A673 (cell line): ENCODE measurements at regions of chr14 and their contacts with region 1.

Region 1: DNA sequence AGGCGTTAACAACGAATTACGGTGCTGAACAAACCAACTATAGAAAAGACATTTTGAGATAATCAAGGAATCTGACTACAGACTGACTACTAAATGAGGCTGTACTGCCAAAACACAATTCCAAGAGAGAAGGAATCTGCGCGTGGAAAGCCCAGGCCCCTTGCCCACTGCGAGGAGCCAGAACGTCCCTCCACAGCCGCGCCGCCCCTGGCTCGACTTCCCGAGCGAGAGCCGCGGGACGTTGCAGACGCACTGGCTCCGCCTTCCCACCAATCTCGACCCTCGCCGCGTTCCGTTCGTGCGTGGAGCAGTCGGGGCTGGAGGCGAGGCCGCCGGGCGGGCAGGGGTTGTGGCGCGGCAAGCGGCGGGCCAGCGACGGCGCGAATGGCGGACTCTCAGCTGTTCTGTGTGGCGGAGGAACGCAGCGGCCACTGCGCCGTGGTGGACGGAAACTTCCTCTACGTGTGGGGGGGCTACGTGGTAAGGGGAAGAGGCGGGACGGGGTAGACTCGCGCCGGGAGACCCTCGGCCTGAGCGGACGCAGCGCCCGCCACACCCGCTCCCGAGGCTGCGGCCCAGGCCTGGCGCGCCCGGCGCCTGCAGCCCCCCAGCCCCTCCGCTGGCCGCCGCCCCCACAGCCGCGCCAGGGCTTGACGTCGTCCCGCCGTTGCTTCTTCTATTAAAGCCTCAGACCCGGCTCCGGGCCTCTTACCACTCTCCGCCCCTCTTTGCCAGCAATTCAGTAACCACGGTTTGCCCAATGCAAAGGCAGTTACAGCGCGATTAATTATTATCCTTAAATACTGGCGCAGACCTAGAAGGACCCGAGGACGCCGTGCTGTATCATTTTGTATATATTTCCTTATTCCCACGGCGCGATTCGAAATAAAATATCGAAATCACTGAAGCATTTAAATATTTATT is at the start of gene KLHDC1:
- DNase-seq: peak; percentile 88
- H3K4me3 ChIP-seq: peak within 1 kb of the TSS; percentile 62
- H3K27ac ChIP-seq: peak within 1 kb of the TSS; percentile 90
- H3K4me1 ChIP-seq: peaks cover 5% of the 10 kb centered on the region
- H3K27me3 ChIP-seq: no peaks in the 10 kb centered on the region
- CTCF ChIP-seq: no peak
- total RNA-seq, gene KLHDC1: 1.3 TPM in 2 replicates

Region 2: GRCh38 chr14:49550286-49551184 is 142.5 kb before region 1 on chr14:
- CTCF ChIA-PET with region 1: no interaction called
- POLR2A ChIA-PET with region 1: no interaction called
- intact Hi-C with region 1: no loop called
- DNase-seq: peak; percentile 12
- H3K4me3 ChIP-seq: no peak overlapping the region
- H3K27ac ChIP-seq: no peak overlapping the region
- H3K4me1 ChIP-seq: no peaks in the 10 kb centered on the region
- H3K27me3 ChIP-seq: no peaks in the 10 kb centered on the region
- CTCF ChIP-seq: peak; percentile 52

Region 3: DNA sequence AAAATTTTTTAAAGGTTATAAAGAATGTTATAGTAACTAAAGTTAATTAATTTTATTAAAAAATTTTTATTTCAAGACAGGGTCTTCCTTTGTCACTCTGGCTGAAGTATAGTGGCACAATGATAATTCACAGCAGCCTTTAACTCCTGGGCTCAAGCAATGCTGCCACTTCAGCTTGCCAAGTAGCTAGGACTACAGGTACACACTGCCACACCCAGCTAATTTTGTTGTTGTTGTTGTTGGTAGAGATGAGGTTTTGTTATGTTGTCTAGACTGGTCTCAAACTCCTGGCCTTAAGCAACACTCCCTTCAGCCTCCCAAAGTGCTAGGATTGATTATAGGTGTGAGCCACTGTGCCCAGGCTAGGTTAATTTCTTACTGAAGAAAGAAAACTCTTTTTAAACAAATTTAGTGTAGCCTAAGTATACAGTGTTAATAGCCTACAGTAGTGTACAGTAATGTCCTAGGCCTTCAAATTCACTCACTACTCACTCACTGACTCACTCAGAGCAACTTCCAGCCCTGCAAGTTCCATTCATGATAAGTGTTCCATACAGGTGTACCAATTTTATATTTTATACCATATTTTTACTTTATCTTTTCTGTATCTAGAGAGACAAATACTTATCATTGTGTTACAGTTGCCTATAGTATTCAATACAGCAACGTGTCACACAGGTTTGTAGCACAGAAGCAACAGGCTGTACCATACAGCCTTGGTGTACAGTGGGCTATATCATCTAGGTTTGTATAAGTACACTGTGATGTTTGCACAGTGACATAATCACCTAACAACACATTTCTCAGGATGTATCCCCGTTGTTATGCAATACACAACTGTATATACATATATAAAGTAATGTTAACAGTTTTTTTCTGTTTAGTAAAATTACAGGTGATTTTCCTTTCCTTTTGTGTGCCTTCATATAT is 33.3 kb before region 1 on chr14:
- CTCF ChIA-PET with region 1: no interaction called
- POLR2A ChIA-PET with region 1: no interaction called
- intact Hi-C with region 1: no loop called
- DNase-seq: no peak
- H3K4me3 ChIP-seq: no peak overlapping the region
- H3K27ac ChIP-seq: no peak overlapping the region
- H3K4me1 ChIP-seq: no peaks in the 10 kb centered on the region
- H3K27me3 ChIP-seq: no peaks in the 10 kb centered on the region
- CTCF ChIP-seq: no peak

Region 4: GRCh38 chr14:49767562-49768300 is 74.7 kb after region 1 on chr14 and contains the start of gene KLHDC2:
- CTCF ChIA-PET with region 1: no interaction called
- POLR2A ChIA-PET with region 1: no interaction called
- intact Hi-C with region 1: loop called (anchors 2 kb)
- DNase-seq: peak; percentile 93
- H3K4me3 ChIP-seq: peak within 1 kb of the TSS; percentile 99
- H3K27ac ChIP-seq: peak within 1 kb of the TSS; percentile 98
- H3K4me1 ChIP-seq: no peaks in the 10 kb centered on the region
- H3K27me3 ChIP-seq: no peaks in the 10 kb centered on the region
- CTCF ChIP-seq: peak; percentile 59; the same call in 1 of the 2 replicates
- total RNA-seq, gene KLHDC2: 34.0 and 39.6 TPM in 2 replicates